Posterior vena cava (tissue), 2 donors: ENCODE measurements at regions of chr1 and their contacts with region 1.

Region 1: GRCh38 chr1:8197493-8198282 is 120.2 kb upstream of the SLC45A1 start:
- DNase-seq: peak; percentile 85

Region 2: GRCh38 chr1:8142955-8143629 is 54.6 kb before region 1 on chr1:
- intact Hi-C with region 1: loop called in 1 of 2 experiments (anchors 10 kb)
- DNase-seq: no peak